ENCODE measurements at regions of chr19 and their contacts with region 1.

Region 1: GRCh38 chr19:45405435-45406225 is 761 bp upstream of the PPP1R13L start:
- DNase-seq: peak; percentile 90 to 94 (median 91)
- ATAC-seq: peak; percentile 77
- H3K4me3 ChIP-seq: peak overlapping the region; percentile 78
- H3K27ac ChIP-seq: peak overlapping the region; percentile 98
- H3K4me1 ChIP-seq: peaks cover 22 to 60% of the 10 kb centered on the region in 2 experiments; a peak in 4 of 5 replicates
- H3K27me3 ChIP-seq: no peaks in the 10 kb centered on the region
- CTCF ChIP-seq: peak in 1 of 3 experiments; percentile 11; a peak in 1 of 6 replicates
- EP300 ChIP-seq: no peak; the same call in 1 of the 2 replicates
- POLR2A ChIP-seq: peak; percentile 61
- RAD21 ChIP-seq: no peak

Region 2: GRCh38 chr19:45370410-45371204 is 35.0 kb before region 1 on chr19 and contains the start of gene ERCC2:
- CTCF ChIA-PET with region 1: no interaction called
- POLR2A ChIA-PET with region 1: interaction called, 3 read pairs
- in situ Hi-C with region 1: no loop called
- intact Hi-C with region 1: loop called (anchors 2 kb)
- DNase-seq: peak; percentile 99 to 100 (median 100)
- ATAC-seq: peak; percentile 99
- H3K4me3 ChIP-seq: peak within 1 kb of the TSS; percentile 78
- H3K27ac ChIP-seq: peak within 1 kb of the TSS; percentile 84
- H3K4me1 ChIP-seq: peaks cover 10 to 27% of the 10 kb centered on the region in 2 experiments
- H3K27me3 ChIP-seq: no peaks in the 10 kb centered on the region
- CTCF ChIP-seq: no peak
- EP300 ChIP-seq: no peak
- POLR2A ChIP-seq: peak; percentile 88
- RAD21 ChIP-seq: no peak
- polyA plus RNA-seq, gene ERCC2: 2.2 to 2.4 TPM

Region 3: DNA sequence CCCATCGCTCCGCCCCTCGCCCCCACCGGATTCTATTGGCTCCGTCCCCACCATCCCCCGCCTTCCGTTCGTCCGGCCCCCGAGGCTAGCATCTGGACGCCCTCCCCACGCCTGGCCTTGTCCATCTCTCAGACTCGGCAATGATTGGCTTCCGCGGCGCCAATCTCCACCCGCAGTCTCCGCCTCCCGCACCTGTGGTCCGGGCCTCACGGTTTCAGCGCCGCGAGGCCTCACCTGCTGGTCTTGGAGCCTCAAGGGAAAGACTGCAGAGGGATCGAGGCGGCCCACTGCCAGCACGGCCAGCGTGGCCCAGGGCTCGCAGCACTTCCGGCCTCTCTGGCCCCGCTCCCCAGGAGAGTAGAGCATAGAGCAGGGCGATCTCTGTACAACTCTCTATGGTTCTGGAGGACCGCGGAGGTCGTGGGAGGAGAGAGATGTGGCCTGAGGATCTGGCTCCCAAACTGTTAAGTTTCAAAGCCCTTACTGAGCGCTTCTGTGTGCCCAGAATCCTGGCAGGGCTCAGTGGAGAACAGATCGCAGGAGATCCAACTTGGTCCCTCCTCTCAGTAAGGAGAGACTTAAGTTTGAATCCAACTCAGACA is 18.1 kb after region 1 on chr19 and contains the start of gene ERCC1:
- CTCF ChIA-PET with region 1: interaction called, 3 read pairs
- POLR2A ChIA-PET with region 1: interaction called, 8 read pairs
- in situ Hi-C with region 1: no loop called
- intact Hi-C with region 1: loop called (anchors 2 kb)
- DNase-seq: peak; percentile 98 to 99 (median 98)
- ATAC-seq: peak; percentile 88
- H3K4me3 ChIP-seq: peak within 1 kb of the TSS; percentile 54
- H3K27ac ChIP-seq: peak within 1 kb of the TSS; percentile 99
- H3K4me1 ChIP-seq: peaks cover 22 to 61% of the 10 kb centered on the region in 2 experiments; a peak in 4 of 5 replicates
- H3K27me3 ChIP-seq: no peaks in the 10 kb centered on the region
- CTCF ChIP-seq: no peak
- EP300 ChIP-seq: peak; percentile 47
- POLR2A ChIP-seq: peak; percentile 96
- RAD21 ChIP-seq: no peak
- polyA plus RNA-seq, gene ERCC1: 9.3 to 17.0 TPM

Region 4: GRCh38 chr19:45469132-45469944 is 63.7 kb after region 1 on chr19:
- CTCF ChIA-PET with region 1: no interaction called
- POLR2A ChIA-PET with region 1: interaction called, 14 read pairs
- in situ Hi-C with region 1: no loop called
- intact Hi-C with region 1: no loop called
- DNase-seq: peak; percentile 94 to 97 (median 97)
- ATAC-seq: peak; percentile 90
- H3K4me3 ChIP-seq: peak overlapping the region; percentile 88
- H3K27ac ChIP-seq: peak overlapping the region; percentile 88
- H3K4me1 ChIP-seq: peaks cover 21 to 53% of the 10 kb centered on the region in 2 experiments; a peak in 4 of 5 replicates
- H3K27me3 ChIP-seq: no peaks in the 10 kb centered on the region
- CTCF ChIP-seq: no peak
- EP300 ChIP-seq: no peak
- POLR2A ChIP-seq: peak; percentile 86
- RAD21 ChIP-seq: no peak

Region 5: DNA sequence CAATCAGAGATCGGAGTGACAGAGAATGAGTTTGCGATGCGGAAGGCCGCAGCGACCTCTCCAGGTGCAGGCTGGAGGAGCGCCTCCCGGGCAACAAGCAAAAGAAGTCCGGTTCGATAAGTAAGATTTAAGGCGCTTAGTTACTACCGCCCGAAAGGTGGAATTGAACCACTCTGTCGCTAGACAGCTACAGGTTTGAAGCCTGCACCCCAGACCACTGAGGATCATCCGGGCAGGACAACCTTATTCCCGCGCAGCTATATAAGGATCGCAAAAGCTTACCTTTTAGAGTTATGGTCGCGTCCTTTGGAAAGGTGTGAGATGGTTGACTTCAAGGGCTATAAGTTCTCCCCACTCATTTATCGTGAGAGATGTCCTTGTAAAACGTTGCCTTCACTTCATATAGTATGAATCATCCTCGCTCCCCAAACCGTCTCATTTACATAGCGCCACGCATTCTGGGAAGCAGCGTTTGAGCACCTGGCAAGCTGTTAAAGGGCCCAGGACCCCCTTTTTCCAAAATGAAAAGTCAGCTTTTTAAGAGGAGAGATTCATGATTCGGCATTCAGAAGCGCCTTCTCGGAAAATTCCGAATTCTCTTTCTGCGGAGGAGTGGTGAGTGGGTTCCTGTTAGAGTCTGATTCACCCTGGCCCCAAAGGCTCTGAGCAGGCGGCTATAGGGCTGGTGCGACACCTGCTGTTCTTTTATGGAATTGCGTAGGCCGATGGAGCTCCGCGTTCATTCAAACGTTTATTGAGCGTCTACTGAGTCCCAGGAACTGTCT is 73.0 kb after region 1 on chr19:
- CTCF ChIA-PET with region 1: interaction called, 16 read pairs
- POLR2A ChIA-PET with region 1: interaction called, 13 read pairs
- in situ Hi-C with region 1: no loop called
- intact Hi-C with region 1: no loop called
- DNase-seq: peak; percentile 80 to 95 (median 82)
- ATAC-seq: peak; percentile 97
- H3K4me3 ChIP-seq: peak overlapping the region; percentile 45
- H3K27ac ChIP-seq: peak overlapping the region; percentile 98
- H3K4me1 ChIP-seq: peaks cover 5 to 6% of the 10 kb centered on the region in 2 experiments; a peak in 2 of 5 replicates
- H3K27me3 ChIP-seq: no peaks in the 10 kb centered on the region
- CTCF ChIP-seq: peak; percentile 95 to 98 (median 98)
- EP300 ChIP-seq: peak; percentile 59
- POLR2A ChIP-seq: peak; percentile 41; the same call in 1 of the 2 replicates
- RAD21 ChIP-seq: peak; percentile 98 to 99

Measured in K562 (cell line).